Activated CD8-positive, alpha-beta memory T cell treated with anti-CD3 and anti-CD28 coated beads, Interleukin-2, amount 10 ng/mL, durations not matched to agents 7 days and 5 days (primary cell): ENCODE measurements at regions of chr19 and their contacts with region 1.

Region 1: GRCh38 chr19:19591133-19591825 is 27.2 kb downstream of the PBX4 start:
- DNase-seq: peak; percentile 88
- ATAC-seq: peak; percentile 91
- H3K4me3 Mint-ChIP-seq: peak overlapping the region; percentile 16
- H3K27ac Mint-ChIP-seq: peak overlapping the region; percentile 92
- H3K4me1 Mint-ChIP-seq: peaks cover 70% of the 10 kb centered on the region
- H3K27me3 Mint-ChIP-seq: no peaks in the 10 kb centered on the region

Region 2: DNA sequence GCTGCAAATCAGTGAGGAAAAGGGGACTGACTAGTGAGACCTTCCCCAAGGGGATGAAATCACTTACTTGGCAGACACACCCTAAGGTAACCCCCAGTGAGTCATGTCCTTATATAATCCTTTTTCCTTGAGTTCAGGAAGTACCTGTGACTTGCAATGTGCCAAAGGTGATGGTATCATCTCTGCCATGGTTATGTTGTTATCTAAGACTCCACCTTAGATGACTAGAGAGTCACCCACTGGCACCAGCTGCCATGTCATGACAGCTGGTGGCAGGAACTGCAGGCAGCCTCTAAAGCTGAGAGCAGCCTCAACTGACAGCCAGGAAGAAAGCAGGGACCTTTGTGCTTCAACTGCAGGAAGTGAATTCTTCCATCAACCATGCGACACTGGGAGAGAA is 14.7 kb after region 1 on chr19:
- CTCF ChIA-PET with region 1: interaction called, 10 read pairs
- DNase-seq: peak; percentile 61
- ATAC-seq: peak; percentile 81
- H3K4me3 Mint-ChIP-seq: no peak overlapping the region
- H3K27ac Mint-ChIP-seq: peak overlapping the region; percentile 86
- H3K4me1 Mint-ChIP-seq: peaks cover 68% of the 10 kb centered on the region
- H3K27me3 Mint-ChIP-seq: no peaks in the 10 kb centered on the region